Mammary epithelial cell (primary cell): ENCODE measurements at regions of chr10 and their contacts with region 1.

Region 1: GRCh38 chr10:17206210-17206709 is 4.8 kb upstream of the TRDMT1 start:
- DNase-seq: peak; percentile 88
- H3K4me3 ChIP-seq: no peak overlapping the region
- H3K27ac ChIP-seq: peak overlapping the region; percentile 60
- H3K4me1 ChIP-seq: peaks cover 24% of the 10 kb centered on the region
- H3K27me3 ChIP-seq: no peaks in the 10 kb centered on the region
- CTCF ChIP-seq: no peak

Region 2: GRCh38 chr10:15684768-15685167 is 1521.5 kb before region 1 on chr10:
- CTCF ChIA-PET with region 1: no interaction called
- dilution Hi-C with region 1: no loop called
- in situ Hi-C with region 1: no loop called
- intact Hi-C with region 1: no loop called
- DNase-seq: no peak
- H3K4me3 ChIP-seq: no peak overlapping the region
- H3K27ac ChIP-seq: no peak overlapping the region
- H3K4me1 ChIP-seq: no peaks in the 10 kb centered on the region
- H3K27me3 ChIP-seq: no peaks in the 10 kb centered on the region
- CTCF ChIP-seq: no peak

Region 3: DNA sequence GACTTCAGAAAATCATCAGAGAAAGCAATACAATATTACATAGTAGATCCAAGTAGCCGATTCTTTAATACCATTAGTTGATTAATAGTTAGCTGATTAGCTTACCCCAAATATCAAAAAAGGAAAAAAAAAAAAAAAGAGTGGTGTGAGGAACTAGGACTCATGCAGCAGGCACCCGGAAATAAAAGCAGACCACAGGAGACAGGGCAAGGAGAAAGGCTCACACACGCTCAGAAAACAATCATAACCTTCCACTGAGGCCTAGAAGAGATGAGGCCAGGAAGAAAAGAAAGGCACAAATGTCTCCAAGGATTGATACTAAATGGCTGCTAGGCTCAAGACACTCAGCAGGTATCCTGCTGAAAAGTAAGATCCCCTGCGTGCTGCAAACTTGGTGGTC is 30.7 kb before region 1 on chr10:
- CTCF ChIA-PET with region 1: no interaction called
- dilution Hi-C with region 1: no loop called
- in situ Hi-C with region 1: no loop called
- intact Hi-C with region 1: no loop called
- DNase-seq: no peak
- H3K4me3 ChIP-seq: no peak overlapping the region
- H3K27ac ChIP-seq: no peak overlapping the region
- H3K4me1 ChIP-seq: no peaks in the 10 kb centered on the region
- H3K27me3 ChIP-seq: no peaks in the 10 kb centered on the region
- CTCF ChIP-seq: no peak

Region 4: DNA sequence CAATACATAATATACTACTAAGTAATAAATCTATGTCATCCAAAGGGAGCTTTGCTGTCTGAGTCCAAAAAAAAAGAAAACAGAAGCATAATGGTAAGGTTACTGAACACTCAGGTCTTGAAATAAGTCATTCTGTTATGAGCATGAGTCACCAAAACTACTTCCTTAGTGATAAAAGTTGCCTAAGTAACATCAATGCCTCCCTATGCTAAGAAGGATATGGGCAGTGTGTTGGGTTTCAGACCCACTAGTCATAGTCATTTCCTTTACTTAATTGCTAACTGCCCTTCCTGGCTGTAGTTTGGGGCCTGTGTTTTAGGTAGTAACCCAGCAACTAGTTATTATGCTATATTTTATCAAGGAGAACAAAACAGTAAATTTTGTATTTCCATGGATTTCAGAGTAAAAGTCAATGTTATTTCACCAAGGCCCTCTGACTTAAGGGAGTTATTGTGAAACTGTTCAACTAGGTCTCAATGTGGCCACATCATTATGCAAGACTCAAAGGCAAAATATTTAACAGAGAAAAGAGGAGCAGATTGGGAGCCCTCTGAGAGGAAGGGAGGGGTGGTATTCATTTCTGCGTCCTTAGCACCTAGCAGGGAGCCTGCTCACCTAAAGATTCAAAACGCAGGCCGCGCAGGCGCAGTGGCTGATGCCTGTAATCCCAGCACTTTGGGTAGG is 10.1 kb after region 1 on chr10:
- CTCF ChIA-PET with region 1: no interaction called
- dilution Hi-C with region 1: no loop called
- in situ Hi-C with region 1: no loop called
- intact Hi-C with region 1: loop called (anchors 1 kb)
- DNase-seq: peak; percentile 97
- H3K4me3 ChIP-seq: no peak overlapping the region
- H3K27ac ChIP-seq: peak overlapping the region; percentile 100
- H3K4me1 ChIP-seq: peaks cover 43% of the 10 kb centered on the region
- H3K27me3 ChIP-seq: no peaks in the 10 kb centered on the region
- CTCF ChIP-seq: no peak